Right cardiac atrium (tissue), 5 donors: ENCODE measurements at regions of chr12 and their contacts with region 1.

Region 1: DNA sequence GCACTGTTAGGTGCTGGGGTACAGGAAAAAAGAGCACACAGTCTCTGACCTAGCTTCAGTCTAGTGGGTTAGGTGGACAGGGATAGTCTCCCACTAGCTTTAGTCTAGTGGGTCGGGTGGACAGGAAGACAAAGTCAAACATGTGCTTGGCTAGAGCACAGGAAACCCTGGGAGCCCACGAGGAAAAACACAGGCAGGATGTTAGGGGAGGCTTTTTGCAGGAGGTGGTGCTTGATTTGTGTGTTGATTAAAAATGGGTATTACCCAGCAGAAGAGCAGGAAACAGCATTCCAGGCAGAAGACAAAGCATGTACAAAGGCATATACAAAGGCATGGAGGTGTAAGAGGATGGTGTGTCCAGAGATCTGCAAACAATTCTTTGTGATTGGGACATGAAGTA is 23.3 kb downstream of the SLC38A2 start:
- DNase-seq: no peak
- ATAC-seq: no peak
- H3K4me3 ChIP-seq: no peak overlapping the region
- H3K27ac ChIP-seq: no peak overlapping the region
- H3K4me1 ChIP-seq: peaks cover 2% of the 10 kb centered on the region
- H3K27me3 ChIP-seq: no peaks in the 10 kb centered on the region

Region 2: GRCh38 chr12:46933947-46934346 is 584.7 kb after region 1 on chr12:
- intact Hi-C with region 1: loop called in 1 of 4 experiments (anchors 5 kb)
- DNase-seq: no peak
- ATAC-seq: peak; percentile 52 to 55
- H3K4me3 ChIP-seq: no peak overlapping the region
- H3K27ac ChIP-seq: no peak overlapping the region
- H3K4me1 ChIP-seq: no peaks in the 10 kb centered on the region
- H3K27me3 ChIP-seq: no peaks in the 10 kb centered on the region

Region 3: GRCh38 chr12:47014474-47014873 is 665.2 kb after region 1 on chr12:
- intact Hi-C with region 1: loop called in 1 of 4 experiments (anchors 5 kb)
- DNase-seq: no peak
- ATAC-seq: no peak
- H3K4me3 ChIP-seq: no peak overlapping the region
- H3K27ac ChIP-seq: no peak overlapping the region
- H3K4me1 ChIP-seq: no peaks in the 10 kb centered on the region
- H3K27me3 ChIP-seq: no peaks in the 10 kb centered on the region